CD4-positive, alpha-beta memory T cell (primary cell): ENCODE measurements at regions of chr2 and their contacts with region 1.

Region 1: GRCh38 chr2:201071479-201072200 is at the starts of genes HYCC2 and NDUFB3:
- DNase-seq: peak; percentile 95 to 96 (median 95)
- H3K4me3 ChIP-seq: peak within 1 kb of the TSS; percentile 94 to 96
- H3K4me3 Mint-ChIP-seq: peak within 1 kb of the TSS; percentile 91 to 100 (median 98)
- H3K27ac ChIP-seq: peak within 1 kb of the TSS; percentile 79
- H3K27ac Mint-ChIP-seq: peak within 1 kb of the TSS; percentile 94 to 99 (median 98)
- H3K4me1 ChIP-seq: peaks cover 52% of the 10 kb centered on the region
- H3K4me1 Mint-ChIP-seq: peaks cover 35 to 62% (median 46%) of the 10 kb centered on the region in 4 donors
- H3K27me3 ChIP-seq: no peaks in the 10 kb centered on the region
- H3K27me3 Mint-ChIP-seq: peaks cover 0 to 2% of the 10 kb centered on the region in 2 donors
- total RNA-seq, gene HYCC2: 33.1 to 36.4 TPM
- total RNA-seq, gene NDUFB3: 48.7 to 53.6 TPM

Region 2: DNA sequence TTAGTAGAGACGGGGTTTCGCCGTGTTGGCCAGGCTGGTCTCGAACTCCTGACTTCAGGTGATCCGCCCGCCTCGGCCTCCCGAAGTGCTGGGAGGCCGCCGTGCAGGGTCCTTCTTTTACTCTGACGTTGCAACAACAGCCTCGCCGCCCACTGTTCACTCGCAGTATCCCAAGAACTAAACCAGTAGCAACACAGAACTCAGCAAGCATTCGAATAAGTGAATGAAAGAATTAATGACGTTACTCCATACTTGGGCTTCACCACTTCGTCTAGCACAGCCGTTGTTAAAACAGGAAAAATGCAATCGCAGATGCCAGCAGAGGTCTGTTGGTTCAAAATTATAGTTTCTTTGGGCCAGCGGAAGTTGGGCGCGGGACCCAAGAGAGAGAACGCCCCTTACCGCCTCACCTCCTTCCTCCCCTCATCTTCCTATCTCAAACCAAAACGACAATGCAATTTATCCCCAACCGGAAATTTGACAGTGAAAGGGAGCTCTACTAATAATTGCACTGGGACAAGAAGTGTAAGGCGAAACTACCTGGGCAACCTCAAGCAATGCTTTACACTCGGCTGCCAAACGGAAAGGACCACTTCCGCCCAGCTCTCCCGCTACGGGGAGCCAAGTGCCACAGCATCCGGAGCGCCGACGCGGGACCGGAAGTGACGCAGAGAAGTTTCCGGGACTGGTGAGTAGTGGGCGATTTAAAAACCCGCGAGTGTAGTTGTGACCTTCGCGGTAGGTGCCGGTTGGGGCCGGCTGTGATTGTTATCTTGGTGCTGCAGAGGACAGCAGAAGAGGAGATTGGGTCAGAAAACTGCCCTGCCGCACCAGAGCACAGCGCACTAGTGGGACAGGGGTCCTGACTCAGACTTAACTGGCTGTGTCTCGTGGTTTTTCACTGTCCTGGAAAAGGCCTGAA is 182.7 kb before region 1 on chr2 and contains the starts of genes NIF3L1 and PPIL3:
- CTCF ChIA-PET with region 1: interaction called, 9 read pairs
- POLR2A ChIA-PET with region 1: interaction called, 9 read pairs
- intact Hi-C with region 1: loop called (anchors 1 kb)
- DNase-seq: peak; percentile 96 to 98 (median 96)
- H3K4me3 ChIP-seq: peak within 1 kb of the TSS; percentile 91 to 92
- H3K4me3 Mint-ChIP-seq: peak within 1 kb of the TSS; percentile 90 to 98 (median 96)
- H3K27ac ChIP-seq: peak within 1 kb of the TSS; percentile 85
- H3K27ac Mint-ChIP-seq: peak within 1 kb of the TSS; percentile 98 to 100 (median 99)
- H3K4me1 ChIP-seq: peaks cover 31% of the 10 kb centered on the region
- H3K4me1 Mint-ChIP-seq: peaks cover 30 to 57% (median 45%) of the 10 kb centered on the region in 4 donors
- H3K27me3 ChIP-seq: no peaks in the 10 kb centered on the region
- H3K27me3 Mint-ChIP-seq: no peaks in the 10 kb centered on the region
- total RNA-seq, gene NIF3L1: 30.0 to 30.3 TPM
- total RNA-seq, gene PPIL3: 48.0 to 57.7 TPM

Region 3: GRCh38 chr2:200963124-200963917 is 108.3 kb before region 1 on chr2 and contains the start of gene ORC2:
- CTCF ChIA-PET with region 1: interaction called, 53 read pairs
- POLR2A ChIA-PET with region 1: interaction called, 12 read pairs
- intact Hi-C with region 1: loop called (anchors 1 kb)
- DNase-seq: peak; percentile 93 to 97 (median 94)
- H3K4me3 ChIP-seq: peak within 1 kb of the TSS; percentile 87 to 95
- H3K4me3 Mint-ChIP-seq: peak within 1 kb of the TSS; percentile 96 to 99 (median 98)
- H3K27ac ChIP-seq: peak within 1 kb of the TSS; percentile 79
- H3K27ac Mint-ChIP-seq: peak within 1 kb of the TSS; percentile 98 to 100 (median 99)
- H3K4me1 ChIP-seq: peaks cover 47% of the 10 kb centered on the region
- H3K4me1 Mint-ChIP-seq: peaks cover 35 to 73% (median 56%) of the 10 kb centered on the region in 4 donors
- H3K27me3 ChIP-seq: no peaks in the 10 kb centered on the region
- H3K27me3 Mint-ChIP-seq: no peaks in the 10 kb centered on the region
- total RNA-seq, gene ORC2: 72.2 to 76.4 TPM

Region 4: DNA sequence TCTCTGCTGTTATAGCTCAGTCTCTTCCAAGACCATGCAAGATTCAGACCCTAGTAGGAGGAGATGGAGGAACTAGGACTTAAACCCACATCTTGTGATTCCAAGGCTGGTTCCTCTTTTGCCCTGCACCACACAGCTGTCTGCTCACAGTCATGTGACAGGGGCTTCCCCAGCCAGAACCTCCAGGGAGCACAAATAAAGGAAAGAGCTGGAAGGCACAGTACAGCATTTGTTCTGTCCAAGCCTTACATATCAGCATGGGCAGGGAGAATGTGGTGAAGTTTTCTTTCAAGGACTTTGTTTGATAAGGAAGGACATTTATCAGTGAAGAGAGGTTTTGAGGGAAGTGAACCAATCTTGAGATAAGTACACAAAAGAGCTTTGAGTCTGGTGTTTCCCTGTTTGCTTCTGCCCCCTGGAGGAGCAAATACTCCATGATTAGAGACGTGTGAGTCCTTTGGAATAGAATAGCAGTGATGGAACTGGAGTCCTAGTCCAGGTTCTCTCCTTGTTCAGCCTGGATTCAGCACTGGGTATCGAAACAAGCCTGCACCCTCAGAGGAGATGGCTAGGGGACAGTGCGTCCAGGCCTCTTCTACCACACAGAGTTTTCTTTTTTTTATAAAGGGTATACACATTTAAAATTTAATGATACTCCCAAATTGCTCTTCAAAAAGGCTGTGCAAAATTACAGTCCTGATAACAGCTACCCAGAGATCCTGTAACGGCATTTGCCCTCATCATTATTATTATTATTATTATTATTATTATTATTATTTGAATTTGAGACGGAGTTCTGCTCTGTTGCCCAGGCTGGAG is 86.7 kb after region 1 on chr2:
- CTCF ChIA-PET with region 1: interaction called, 63 read pairs
- POLR2A ChIA-PET with region 1: interaction called, 16 read pairs
- intact Hi-C with region 1: loop called (anchors 1 kb)
- DNase-seq: peak; percentile 64 to 75 (median 68)
- H3K4me3 ChIP-seq: no peak overlapping the region
- H3K4me3 Mint-ChIP-seq: peak overlapping the region in 3 of 8 donors; percentile 26 to 52 (median 30)
- H3K27ac ChIP-seq: peak overlapping the region; percentile 44
- H3K27ac Mint-ChIP-seq: peak overlapping the region; percentile 69 to 95 (median 89)
- H3K4me1 ChIP-seq: peaks cover 19% of the 10 kb centered on the region
- H3K4me1 Mint-ChIP-seq: peaks cover 9 to 23% (median 16%) of the 10 kb centered on the region in 4 donors
- H3K27me3 ChIP-seq: no peaks in the 10 kb centered on the region
- H3K27me3 Mint-ChIP-seq: no peaks in the 10 kb centered on the region